ENCODE measurements at regions of chr20 and their contacts with region 1.

Region 1: GRCh38 chr20:5187122-5187521 is 60.3 kb downstream of the CDS2 start:
- DNase-seq: no peak
- CTCF ChIP-seq: no peak

Region 2: GRCh38 chr20:4944518-4945313 is 242.4 kb before region 1 on chr20:
- in situ Hi-C with region 1: no loop called
- DNase-seq: no peak
- CTCF ChIP-seq: no peak

Region 3: GRCh38 chr20:5119435-5120188 is 67.5 kb before region 1 on chr20 and contains the start of gene PCNA:
- in situ Hi-C with region 1: loop called (anchors 5 kb)
- DNase-seq: peak; percentile 96
- CTCF ChIP-seq: no peak